Activated CD8-positive, alpha-beta memory T cell treated with anti-CD3 and anti-CD28 coated beads, Interleukin-2, amount 10 ng/mL, durations not matched to agents 7 days and 5 days (primary cell): ENCODE measurements at regions of chr6 and their contacts with region 1.

Region 1: DNA sequence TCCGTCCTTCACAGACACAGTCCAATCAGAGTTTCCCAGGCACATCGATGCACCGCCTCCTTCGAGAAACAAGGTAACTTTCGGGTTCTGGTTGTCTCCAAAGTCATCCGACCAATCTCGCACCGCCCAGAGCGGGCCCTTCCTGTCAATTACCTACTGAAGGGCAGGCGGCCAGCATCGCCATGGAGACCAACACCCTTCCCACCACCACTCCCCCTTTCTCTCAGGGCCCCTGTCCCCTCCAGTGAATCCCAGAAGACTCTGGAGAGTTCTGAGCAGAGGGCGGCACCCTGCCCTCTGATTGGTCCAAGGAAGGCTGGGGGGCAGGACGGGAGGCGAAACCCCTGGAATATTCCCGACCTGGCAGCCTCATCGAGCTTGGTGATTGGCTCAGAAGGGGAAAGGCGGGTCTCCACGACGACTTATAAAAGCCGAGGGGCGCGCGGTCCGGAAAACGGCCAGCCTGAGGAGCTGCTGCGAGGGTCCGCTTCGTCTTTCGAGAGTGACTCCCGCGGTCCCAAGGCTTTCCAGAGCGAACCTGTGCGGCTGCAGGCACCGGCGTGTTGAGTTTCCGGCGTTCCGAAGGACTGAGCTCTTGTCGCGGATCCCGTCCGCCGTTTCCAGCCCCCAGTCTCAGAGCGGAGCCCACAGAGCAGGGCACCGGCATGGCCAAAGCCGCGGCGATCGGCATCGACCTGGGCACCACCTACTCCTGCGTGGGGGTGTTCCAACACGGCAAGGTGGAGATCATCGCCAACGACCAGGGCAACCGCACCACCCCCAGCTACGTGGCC is at the start of gene HSPA1B:
- DNase-seq: peak; percentile 99
- ATAC-seq: peak; percentile 82
- H3K4me3 Mint-ChIP-seq: peak within 1 kb of the TSS; percentile 85
- H3K27ac Mint-ChIP-seq: peak within 1 kb of the TSS; percentile 97
- H3K4me1 Mint-ChIP-seq: peaks cover 52% of the 10 kb centered on the region
- H3K27me3 Mint-ChIP-seq: no peaks in the 10 kb centered on the region
- total RNA-seq, gene HSPA1B: 64.6 to 71.6 TPM

Region 2: DNA sequence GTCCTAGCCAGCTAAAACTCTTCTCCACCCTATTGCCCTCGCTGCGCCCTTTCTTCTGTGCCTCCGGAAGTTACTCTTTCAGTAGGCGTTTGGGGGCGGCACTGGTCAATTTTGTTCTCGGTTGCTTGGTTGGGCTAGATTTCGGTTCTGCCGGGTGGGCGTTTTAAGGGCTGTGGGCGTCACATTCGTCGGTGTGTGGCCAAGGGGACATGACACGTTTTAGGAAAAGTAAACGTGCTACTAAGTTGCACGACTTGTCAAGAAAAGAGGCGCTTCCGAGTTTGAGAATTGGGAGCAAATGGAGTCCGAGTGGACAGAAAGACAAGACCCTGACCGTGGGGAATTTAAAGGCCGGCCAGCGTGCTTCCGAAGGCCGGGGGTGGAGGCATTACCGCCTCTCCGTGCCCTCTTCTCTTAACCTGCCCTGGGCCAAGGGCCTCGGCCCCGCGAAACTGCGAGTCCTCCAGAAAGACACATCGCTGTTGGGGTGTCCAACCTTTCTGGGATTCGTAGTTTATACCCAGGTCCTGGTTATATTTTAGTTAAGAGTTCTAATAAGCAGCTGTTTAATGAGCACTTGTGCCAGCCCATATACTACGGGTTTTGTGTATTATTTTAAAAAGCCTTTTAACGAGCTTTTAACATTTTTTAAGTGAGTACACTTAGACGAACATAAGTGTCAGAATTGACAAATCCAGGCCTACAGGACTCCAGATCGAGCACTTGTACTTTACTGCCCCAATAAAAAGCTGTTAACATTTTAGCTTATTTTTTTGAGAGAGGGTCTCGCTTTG is 174.4 kb before region 1 on chr6:
- CTCF ChIA-PET with region 1: interaction called, 12 read pairs
- DNase-seq: peak; percentile 94
- ATAC-seq: peak; percentile 74
- H3K4me3 Mint-ChIP-seq: peak overlapping the region; percentile 89
- H3K27ac Mint-ChIP-seq: peak overlapping the region; percentile 96
- H3K4me1 Mint-ChIP-seq: peaks cover 62% of the 10 kb centered on the region
- H3K27me3 Mint-ChIP-seq: no peaks in the 10 kb centered on the region

Region 3: GRCh38 chr6:31729515-31729978 is 97.9 kb before region 1 on chr6:
- CTCF ChIA-PET with region 1: interaction called, 51 read pairs
- DNase-seq: peak; percentile 87
- ATAC-seq: peak; percentile 72
- H3K4me3 Mint-ChIP-seq: peak overlapping the region; percentile 86
- H3K27ac Mint-ChIP-seq: peak overlapping the region; percentile 80
- H3K4me1 Mint-ChIP-seq: peaks cover 65% of the 10 kb centered on the region
- H3K27me3 Mint-ChIP-seq: no peaks in the 10 kb centered on the region

Region 4: DNA sequence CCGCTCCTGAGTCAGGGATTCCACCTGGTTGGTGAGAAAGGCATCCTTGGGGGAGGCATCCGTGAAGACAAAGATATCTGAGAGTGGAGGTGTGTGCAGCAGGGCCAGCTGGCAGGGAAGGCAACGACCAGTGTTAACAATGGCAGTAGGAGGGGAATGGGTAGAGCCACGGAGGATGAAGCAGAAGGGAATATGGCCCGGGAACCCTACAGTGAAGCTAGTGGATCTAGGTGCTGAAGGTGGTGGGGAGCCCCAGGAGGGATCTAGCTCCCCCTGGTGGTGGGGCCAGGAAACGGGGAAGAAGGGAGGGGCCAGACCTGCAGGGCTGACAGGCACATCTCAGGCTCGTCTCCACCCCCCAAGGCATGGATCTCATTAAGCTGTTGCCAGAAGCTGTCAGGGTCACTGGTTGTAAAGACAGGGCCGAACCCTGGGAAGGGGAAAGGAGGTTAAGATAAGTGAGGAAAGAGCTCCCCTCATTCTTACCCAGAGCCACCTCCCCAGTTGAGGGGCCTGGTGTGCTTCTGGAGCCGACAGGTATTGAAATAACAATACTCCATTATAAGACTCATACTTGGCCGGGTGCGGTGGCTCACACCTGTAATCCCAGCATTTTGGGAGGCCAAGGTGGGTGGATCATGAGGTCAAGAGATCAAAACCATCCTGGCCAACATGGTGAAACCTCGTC is 57.7 kb before region 1 on chr6:
- CTCF ChIA-PET with region 1: interaction called, 13 read pairs
- DNase-seq: peak; percentile 92
- ATAC-seq: peak; percentile 91
- H3K4me3 Mint-ChIP-seq: no peak overlapping the region
- H3K27ac Mint-ChIP-seq: peak overlapping the region; percentile 16
- H3K4me1 Mint-ChIP-seq: peaks cover 31% of the 10 kb centered on the region
- H3K27me3 Mint-ChIP-seq: no peaks in the 10 kb centered on the region

Region 5: GRCh38 chr6:31806465-31807272 is 20.8 kb before region 1 on chr6 and contains the start of gene LSM2:
- CTCF ChIA-PET with region 1: interaction called, 18 read pairs
- DNase-seq: peak; percentile 98
- ATAC-seq: peak; percentile 98
- H3K4me3 Mint-ChIP-seq: peak within 1 kb of the TSS; percentile 94
- H3K27ac Mint-ChIP-seq: peak within 1 kb of the TSS; percentile 89
- H3K4me1 Mint-ChIP-seq: peaks cover 43% of the 10 kb centered on the region
- H3K27me3 Mint-ChIP-seq: no peaks in the 10 kb centered on the region
- total RNA-seq, gene LSM2: 124 to 129 TPM

Region 6: DNA sequence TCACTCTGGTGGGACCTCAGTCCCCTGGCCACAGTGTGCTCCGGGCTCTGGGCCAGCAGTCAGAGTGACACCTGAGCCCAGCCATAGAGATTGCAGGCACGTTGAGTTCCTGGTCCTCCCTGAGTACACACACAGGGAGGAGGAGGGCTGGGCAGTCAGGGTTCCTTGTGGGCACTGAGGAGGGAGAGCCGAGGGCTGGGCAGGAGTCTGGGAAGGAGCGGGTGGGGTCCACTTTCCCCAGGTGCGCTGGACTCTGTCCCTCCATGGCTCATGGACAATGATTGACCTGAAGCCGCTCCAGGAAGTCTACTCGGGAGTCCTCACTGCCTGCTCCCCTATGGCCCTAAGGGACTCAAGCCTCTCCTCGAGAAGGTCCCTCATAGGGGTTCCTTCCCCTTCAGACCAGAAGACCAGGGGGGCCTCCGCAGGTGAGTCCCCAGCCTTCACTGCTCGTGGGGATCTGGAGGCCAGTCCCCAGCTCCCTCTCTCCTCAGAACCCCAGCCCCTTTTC is 50.2 kb after region 1 on chr6:
- CTCF ChIA-PET with region 1: no interaction called
- DNase-seq: no peak
- ATAC-seq: no peak
- H3K4me3 Mint-ChIP-seq: no peak overlapping the region
- H3K27ac Mint-ChIP-seq: no peak overlapping the region
- H3K4me1 Mint-ChIP-seq: peaks cover 2% of the 10 kb centered on the region
- H3K27me3 Mint-ChIP-seq: no peaks in the 10 kb centered on the region

Region 7: DNA sequence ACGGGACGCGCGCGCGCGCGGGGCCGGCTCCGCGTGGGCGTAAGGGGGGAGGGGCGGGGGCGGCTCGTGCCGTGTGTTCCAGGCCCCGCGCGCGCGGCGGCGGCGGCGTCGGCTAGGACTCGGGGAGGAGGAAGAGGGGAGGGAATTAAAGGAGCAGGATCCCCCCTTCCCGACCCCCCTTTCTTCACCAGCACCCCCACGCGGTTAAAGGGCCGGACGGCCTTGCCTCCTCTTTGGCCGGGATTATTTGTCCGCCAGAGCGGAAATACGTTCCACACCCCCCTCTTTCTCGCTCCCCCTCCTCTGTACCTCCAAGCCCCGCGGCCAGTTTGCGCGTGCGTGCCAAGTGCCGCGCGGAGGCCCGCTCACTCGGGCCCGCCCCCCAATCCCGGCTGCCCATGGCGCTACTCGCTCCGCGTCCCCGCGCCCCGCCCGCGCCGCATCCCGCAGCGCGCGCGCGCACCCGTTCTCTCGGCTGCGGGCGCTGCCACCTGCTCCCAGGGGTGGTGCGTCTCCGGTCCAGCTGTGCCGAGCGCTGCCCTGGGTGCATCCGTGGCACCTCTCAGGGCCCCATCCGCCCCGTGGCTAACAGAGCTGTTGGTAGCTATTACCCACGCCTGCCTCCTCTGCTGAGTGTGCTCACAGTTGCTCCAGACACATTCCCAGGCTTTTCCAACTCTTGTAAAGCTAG is 74.6 kb after region 1 on chr6 and contains the start of gene ZBTB12:
- CTCF ChIA-PET with region 1: no interaction called
- DNase-seq: peak; percentile 89
- ATAC-seq: peak; percentile 59
- H3K4me3 Mint-ChIP-seq: peak within 1 kb of the TSS; percentile 76
- H3K27ac Mint-ChIP-seq: peak within 1 kb of the TSS; percentile 72
- H3K4me1 Mint-ChIP-seq: peaks cover 36% of the 10 kb centered on the region
- H3K27me3 Mint-ChIP-seq: peaks cover 24% of the 10 kb centered on the region
- total RNA-seq, gene ZBTB12: 1.5 to 3.3 TPM

Region 8: GRCh38 chr6:32212076-32212760 is 384.7 kb after region 1 on chr6:
- CTCF ChIA-PET with region 1: no interaction called
- DNase-seq: no peak
- ATAC-seq: no peak
- H3K4me3 Mint-ChIP-seq: no peak overlapping the region
- H3K27ac Mint-ChIP-seq: no peak overlapping the region
- H3K4me1 Mint-ChIP-seq: peaks cover 5% of the 10 kb centered on the region
- H3K27me3 Mint-ChIP-seq: no peaks in the 10 kb centered on the region